ENCODE measurements at regions of chr19 and their contacts with region 1.

Region 1: GRCh38 chr19:10602330-10603083 is 15.4 kb upstream of the AP1M2 start:
- DNase-seq: peak; percentile 73 to 89 (median 86)
- ATAC-seq: peak; percentile 93
- H3K4me3 ChIP-seq: peak overlapping the region; percentile 92
- H3K4me3 Mint-ChIP-seq: peak overlapping the region; percentile 97 to 100 (median 99)
- H3K27ac ChIP-seq: peak overlapping the region; percentile 100
- H3K27ac Mint-ChIP-seq: peak overlapping the region; percentile 94 to 100 (median 100)
- H3K4me1 ChIP-seq: peaks cover 15 to 20% of the 10 kb centered on the region in 2 donors
- H3K4me1 Mint-ChIP-seq: peaks cover 18 to 37% (median 31%) of the 10 kb centered on the region in 7 donors
- H3K27me3 ChIP-seq: no peaks in the 10 kb centered on the region
- H3K27me3 Mint-ChIP-seq: peaks cover 0 to 12% (median 0%) of the 10 kb centered on the region in 5 donors

Region 2: DNA sequence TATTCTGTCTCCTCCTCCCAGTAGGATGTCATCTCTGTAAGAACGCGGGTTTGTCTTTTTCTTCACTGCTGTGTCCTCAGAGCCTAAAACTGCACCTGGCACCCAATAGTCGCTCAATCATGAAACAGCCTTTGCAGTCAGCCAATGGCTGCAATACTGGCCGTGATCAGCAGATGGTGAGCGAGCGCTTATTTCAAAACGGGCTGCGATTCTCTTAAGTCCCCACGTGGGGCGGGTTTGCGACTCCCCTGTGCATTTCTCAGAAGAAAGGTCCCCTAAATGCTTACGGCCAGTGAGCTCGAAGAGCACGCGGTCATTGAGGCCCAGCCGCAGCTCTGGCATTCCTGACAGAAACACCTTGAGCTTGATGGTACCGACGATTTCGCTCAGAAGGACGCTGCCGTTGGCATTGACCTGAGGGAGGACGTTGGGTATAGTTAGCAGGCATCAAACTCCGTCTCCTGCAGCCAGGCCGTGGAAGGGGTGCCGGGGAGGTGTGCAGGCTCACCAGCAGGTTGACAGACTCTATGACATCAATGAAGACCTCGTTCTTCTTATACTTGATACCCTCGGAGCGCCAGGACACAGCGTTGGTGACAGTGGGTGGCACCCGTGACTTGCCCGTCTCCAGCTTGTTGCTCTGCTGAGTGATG is 21.4 kb before region 1 on chr19:
- CTCF ChIA-PET with region 1: interaction called, 25 read pairs
- POLR2A ChIA-PET with region 1: interaction called, 19 read pairs
- intact Hi-C with region 1: loop called in 1 of 2 experiments (anchors 1 kb)
- DNase-seq: peak; percentile 76 to 88 (median 85)
- ATAC-seq: peak; percentile 100
- H3K4me3 ChIP-seq: no peak overlapping the region
- H3K4me3 Mint-ChIP-seq: peak overlapping the region in 4 of 10 donors; percentile 3 to 33 (median 24)
- H3K27ac ChIP-seq: no peak overlapping the region
- H3K27ac Mint-ChIP-seq: peak overlapping the region in 2 of 9 donors; percentile 2 to 72
- H3K4me1 ChIP-seq: peaks cover 4 to 5% of the 10 kb centered on the region in 2 donors
- H3K4me1 Mint-ChIP-seq: peaks cover 6 to 20% (median 7%) of the 10 kb centered on the region in 7 donors
- H3K27me3 ChIP-seq: no peaks in the 10 kb centered on the region
- H3K27me3 Mint-ChIP-seq: peaks cover 0 to 7% (median 0%) of the 10 kb centered on the region in 5 donors

Region 3: DNA sequence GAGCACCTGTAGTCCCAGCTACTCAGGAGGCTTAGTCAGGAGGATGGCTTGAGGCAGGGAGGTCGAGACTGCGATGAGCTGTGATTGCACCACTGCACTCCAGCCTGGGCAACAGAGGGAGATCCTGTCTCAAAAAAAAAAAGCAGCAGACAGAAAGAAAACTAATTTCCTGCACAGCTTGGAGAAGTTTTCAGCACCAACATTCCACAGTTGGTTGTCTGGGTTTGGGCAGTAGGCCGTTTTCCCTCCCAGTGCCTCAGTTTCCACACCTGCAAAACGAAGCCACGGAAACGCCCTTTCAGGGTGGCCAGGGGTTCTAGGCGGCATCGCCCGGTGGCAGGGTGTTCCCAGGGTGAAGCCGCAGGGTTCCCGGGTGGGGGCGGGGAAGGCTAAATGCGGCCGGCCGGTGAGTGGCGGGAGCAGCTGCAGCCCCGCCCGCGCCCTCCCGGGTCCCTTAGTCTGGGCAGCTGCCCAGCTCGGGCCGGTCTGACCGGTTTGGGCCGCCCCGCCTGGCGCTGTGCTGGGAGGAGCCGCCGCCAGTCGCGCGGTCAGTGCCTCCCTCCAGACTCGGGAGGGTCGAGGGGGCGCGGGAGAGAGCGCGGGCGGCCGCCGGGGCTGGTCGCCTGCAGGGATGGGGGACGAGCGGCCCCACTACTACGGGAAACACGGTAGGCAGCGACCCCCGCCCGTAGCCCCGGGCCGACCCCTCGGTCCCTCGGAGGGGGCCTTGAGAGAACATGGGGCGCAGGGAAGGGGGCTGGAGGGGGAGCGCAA is 22.7 kb after region 1 on chr19 and contains the start of gene SLC44A2:
- CTCF ChIA-PET with region 1: interaction called, 3 read pairs
- POLR2A ChIA-PET with region 1: interaction called, 190 read pairs
- intact Hi-C with region 1: loop called in 1 of 2 experiments (anchors 1 kb)
- DNase-seq: no peak
- ATAC-seq: no peak
- H3K4me3 ChIP-seq: no peak within 1 kb of the TSS
- H3K4me3 Mint-ChIP-seq: peak within 1 kb of the TSS; percentile 27 to 66 (median 56)
- H3K27ac ChIP-seq: peak within 1 kb of the TSS; percentile 51
- H3K27ac Mint-ChIP-seq: peak within 1 kb of the TSS; percentile 71 to 90 (median 87)
- H3K4me1 ChIP-seq: peaks cover 10 to 14% of the 10 kb centered on the region in 2 donors
- H3K4me1 Mint-ChIP-seq: peaks cover 35 to 51% (median 40%) of the 10 kb centered on the region in 7 donors
- H3K27me3 ChIP-seq: no peaks in the 10 kb centered on the region
- H3K27me3 Mint-ChIP-seq: no peaks in the 10 kb centered on the region
- total RNA-seq, gene SLC44A2: 148 to 272 (median 194) TPM

Region 4: GRCh38 chr19:10695401-10696398 is 93.2 kb after region 1 on chr19:
- CTCF ChIA-PET with region 1: no interaction called
- POLR2A ChIA-PET with region 1: interaction called, 7 read pairs
- intact Hi-C with region 1: loop called in 1 of 2 experiments (anchors 2 kb)
- DNase-seq: peak; percentile 79 to 90 (median 85)
- ATAC-seq: peak; percentile 99
- H3K4me3 ChIP-seq: peak overlapping the region; percentile 36
- H3K4me3 Mint-ChIP-seq: peak overlapping the region; percentile 81 to 89 (median 86)
- H3K27ac ChIP-seq: no peak overlapping the region
- H3K27ac Mint-ChIP-seq: peak overlapping the region in 8 of 9 donors; percentile 9 to 88 (median 56)
- H3K4me1 ChIP-seq: peaks cover 4 to 10% of the 10 kb centered on the region in 2 donors
- H3K4me1 Mint-ChIP-seq: peaks cover 12 to 25% (median 21%) of the 10 kb centered on the region in 7 donors
- H3K27me3 ChIP-seq: no peaks in the 10 kb centered on the region
- H3K27me3 Mint-ChIP-seq: peaks cover 0 to 11% (median 0%) of the 10 kb centered on the region in 5 donors

Region 5: DNA sequence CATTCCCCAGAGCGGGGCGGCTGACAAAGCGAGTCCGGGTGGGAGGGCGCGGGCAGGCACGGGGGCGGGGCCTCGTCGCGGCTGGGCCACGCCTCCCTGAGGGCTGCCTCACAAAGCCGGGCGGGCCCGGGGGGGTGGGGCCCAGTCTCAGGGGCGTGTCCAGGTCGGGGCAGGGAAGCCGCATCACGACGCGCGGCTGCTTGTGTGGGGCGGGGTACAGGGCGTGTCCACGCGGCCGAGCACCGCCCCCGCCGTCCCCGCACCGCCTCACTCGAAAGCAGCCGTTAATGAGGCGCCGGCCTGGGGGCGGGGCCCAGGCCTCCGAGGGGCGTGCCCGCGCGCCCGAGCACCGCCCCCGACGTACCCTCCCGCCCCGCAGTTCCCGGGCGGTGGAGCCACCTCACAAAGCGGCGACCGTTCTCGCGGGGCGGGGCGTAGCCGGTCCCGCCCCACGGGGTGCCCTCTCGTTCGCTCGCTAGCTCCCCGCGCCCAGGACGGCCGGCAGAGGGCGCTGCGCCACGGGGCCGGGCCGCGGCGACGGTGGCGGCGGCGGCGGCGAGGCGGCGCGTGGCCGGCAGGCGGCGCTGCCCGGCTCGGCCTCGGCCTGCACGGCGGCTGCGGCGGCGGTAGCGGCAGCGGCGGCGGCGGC is 268.6 kb after region 1 on chr19 and contains the start of gene CARM1:
- CTCF ChIA-PET with region 1: no interaction called
- POLR2A ChIA-PET with region 1: no interaction called
- intact Hi-C with region 1: loop called in 1 of 2 experiments (anchors 1 kb)
- DNase-seq: peak; percentile 99 to 100 (median 99)
- ATAC-seq: peak; percentile 92
- H3K4me3 ChIP-seq: peak within 1 kb of the TSS; percentile 67
- H3K4me3 Mint-ChIP-seq: peak within 1 kb of the TSS; percentile 79 to 91 (median 86)
- H3K27ac ChIP-seq: peak within 1 kb of the TSS; percentile 74
- H3K27ac Mint-ChIP-seq: peak within 1 kb of the TSS; percentile 74 to 96 (median 88)
- H3K4me1 ChIP-seq: peaks cover 10 to 14% of the 10 kb centered on the region in 2 donors
- H3K4me1 Mint-ChIP-seq: peaks cover 5 to 33% (median 25%) of the 10 kb centered on the region in 7 donors
- H3K27me3 ChIP-seq: no peaks in the 10 kb centered on the region
- H3K27me3 Mint-ChIP-seq: no peaks in the 10 kb centered on the region
- total RNA-seq, gene CARM1: 21.3 to 43.1 (median 27.2) TPM

Measured in naive thymus-derived CD4-positive, alpha-beta T cell (primary cell).